ENCODE measurements at regions of chr14 and their contacts with region 1.

Region 1: GRCh38 chr14:20415782-20416206 is 2.5 kb upstream of the TEP1 start:
- DNase-seq: peak; percentile 59 to 70
- H3K4me3 ChIP-seq: no peak overlapping the region
- H3K4me1 ChIP-seq: peaks cover 17% of the 10 kb centered on the region
- H3K27me3 ChIP-seq: no peaks in the 10 kb centered on the region

Region 2: GRCh38 chr14:20454516-20455354 is 38.9 kb after region 1 on chr14 and contains the starts of genes APEX1 and OSGEP:
- in situ Hi-C with region 1: loop called (anchors 5 kb)
- DNase-seq: peak; percentile 99
- H3K4me3 ChIP-seq: peak within 1 kb of the TSS; percentile 72
- H3K4me1 ChIP-seq: peaks cover 5% of the 10 kb centered on the region; the same call in 1 of the 2 replicates
- H3K27me3 ChIP-seq: no peaks in the 10 kb centered on the region